Activated T-helper 1 cell treated with anti-CD3 and anti-CD28 coated beads, Interleukin-12 subunit alpha, Interleukin-12 subunit beta, Interleukin-2, Interleukin-4 antibody, amounts not matched to agents 30 ng/mL and 10 ng/mL and 1 ng/mL, durations not matched to agents 14 hours and 24 hours and 36 hours (primary cell): ENCODE measurements at regions of chr6 and their contacts with region 1.

Region 1: DNA sequence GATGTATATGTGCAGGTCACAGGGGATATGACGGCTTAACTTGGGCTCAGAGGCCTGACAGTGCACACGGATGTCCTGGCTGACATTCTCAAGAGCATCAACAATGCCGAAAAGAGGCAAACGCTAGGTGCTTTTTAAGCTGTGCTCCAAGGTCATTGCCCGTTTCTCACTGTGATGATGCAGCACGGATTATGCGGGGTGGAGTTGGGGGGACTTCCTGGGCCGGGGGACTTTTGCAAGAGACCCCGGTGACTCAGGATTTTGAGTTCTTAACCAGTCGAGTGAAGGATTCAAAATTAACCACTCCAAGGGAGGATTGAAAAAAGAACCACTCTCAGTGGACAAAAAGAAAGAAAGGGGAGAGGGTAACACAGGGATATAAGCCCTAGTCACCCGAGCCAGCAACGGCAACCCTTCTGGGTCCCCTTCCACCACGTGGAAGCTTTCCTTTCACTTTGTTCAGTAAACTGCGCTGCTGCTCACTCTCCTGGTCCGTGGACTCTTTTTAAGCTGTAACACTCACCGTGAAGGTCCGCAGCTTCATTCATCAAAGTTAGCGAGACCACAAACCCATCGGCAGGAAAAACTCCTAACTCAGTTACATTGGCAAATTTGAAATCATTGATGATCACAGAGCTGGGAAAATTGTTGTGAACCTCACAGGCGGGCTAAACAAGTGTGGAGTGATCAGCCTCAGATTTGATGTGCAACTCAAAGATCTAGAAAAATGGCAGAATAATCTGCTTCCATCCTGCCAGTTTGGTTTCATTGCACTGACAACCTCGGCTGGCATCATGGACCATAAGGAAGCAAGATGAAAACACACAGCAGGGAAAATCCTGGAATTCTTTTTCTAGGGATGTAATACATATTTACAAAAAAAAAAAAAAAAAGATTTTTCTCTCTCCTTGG is 199.3 kb downstream of the ARID1B start:
- DNase-seq: no peak
- H3K4me3 Mint-ChIP-seq: peak overlapping the region; percentile 76
- H3K27ac Mint-ChIP-seq: peak overlapping the region; percentile 64
- H3K4me1 Mint-ChIP-seq: peaks cover 57% of the 10 kb centered on the region
- H3K27me3 Mint-ChIP-seq: peaks cover 2% of the 10 kb centered on the region

Region 2: DNA sequence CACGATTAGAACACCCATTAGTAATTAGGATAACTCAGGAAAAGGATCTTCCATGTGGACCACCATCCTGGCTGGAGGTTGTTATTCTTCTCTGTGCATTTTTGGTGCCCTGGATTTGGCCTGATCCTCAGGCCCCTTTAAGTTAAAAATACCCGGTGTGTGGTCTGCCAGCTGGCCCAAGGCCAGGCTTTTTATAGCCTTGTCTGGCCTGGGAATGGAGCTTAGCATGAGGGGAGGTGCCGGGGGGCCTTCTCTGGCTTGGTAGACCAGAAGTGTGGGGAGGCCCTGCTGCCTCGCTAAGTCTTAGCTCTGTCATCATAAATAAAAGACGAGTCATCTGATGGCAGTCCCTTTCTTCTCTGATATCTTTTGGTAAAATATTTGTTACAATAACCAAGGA is 127.9 kb before region 1 on chr6:
- intact Hi-C with region 1: no loop called
- DNase-seq: no peak
- H3K4me3 Mint-ChIP-seq: no peak overlapping the region
- H3K27ac Mint-ChIP-seq: no peak overlapping the region
- H3K4me1 Mint-ChIP-seq: peaks cover 63% of the 10 kb centered on the region
- H3K27me3 Mint-ChIP-seq: no peaks in the 10 kb centered on the region

Region 3: GRCh38 chr6:156933201-156934068 is 43.0 kb before region 1 on chr6:
- intact Hi-C with region 1: loop called (anchors 2 kb)
- DNase-seq: no peak
- H3K4me3 Mint-ChIP-seq: no peak overlapping the region
- H3K27ac Mint-ChIP-seq: no peak overlapping the region
- H3K4me1 Mint-ChIP-seq: peaks cover 45% of the 10 kb centered on the region
- H3K27me3 Mint-ChIP-seq: no peaks in the 10 kb centered on the region